HCT116 (cell line): ENCODE measurements at regions of chr2 and their contacts with region 1.

Region 1: GRCh38 chr2:181953881-181954537 is 31.6 kb upstream of the PPP1R1C start:
- DNase-seq: peak; percentile 83
- ATAC-seq: peak; percentile 62
- H3K4me3 ChIP-seq: peak overlapping the region; percentile 22 to 39
- H3K27ac ChIP-seq: peak overlapping the region; percentile 98
- H3K4me1 ChIP-seq: peaks cover 79 to 97% of the 10 kb centered on the region in 2 experiments
- H3K27me3 ChIP-seq: no peaks in the 10 kb centered on the region
- CTCF ChIP-seq: peak; percentile 32 to 86 (median 68); a peak in 5 of 6 replicates
- POLR2A ChIP-seq: peak; percentile 16
- RAD21 ChIP-seq: peak; percentile 69

Region 2: DNA sequence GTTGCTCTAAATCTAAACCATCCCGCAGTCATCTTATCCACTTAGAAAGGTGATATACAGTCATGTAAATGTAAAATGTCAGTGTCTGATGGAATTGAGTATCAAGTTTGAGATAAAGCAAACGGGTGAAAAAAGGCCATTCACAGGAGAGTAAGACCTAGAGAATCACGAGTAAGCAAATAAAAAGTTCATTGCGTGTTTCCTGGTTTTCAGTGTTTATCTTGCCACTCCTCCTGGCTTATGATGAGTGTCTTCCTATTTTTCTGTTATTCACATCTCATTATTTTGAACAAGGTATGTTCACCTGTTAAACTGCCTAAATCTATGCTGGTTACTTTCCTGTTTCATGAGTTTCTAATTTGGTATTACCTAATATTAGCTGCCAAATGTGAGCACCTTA is 428.0 kb before region 1 on chr2:
- CTCF ChIA-PET with region 1: no interaction called
- POLR2A ChIA-PET with region 1: no interaction called
- RAD21 ChIA-PET with region 1: no interaction called
- intact Hi-C with region 1: no loop called
- DNase-seq: no peak
- ATAC-seq: no peak
- H3K4me3 ChIP-seq: no peak overlapping the region
- H3K27ac ChIP-seq: no peak overlapping the region
- H3K4me1 ChIP-seq: no peaks in the 10 kb centered on the region
- H3K27me3 ChIP-seq: no peaks in the 10 kb centered on the region
- CTCF ChIP-seq: no peak
- POLR2A ChIP-seq: no peak
- RAD21 ChIP-seq: no peak

Region 3: DNA sequence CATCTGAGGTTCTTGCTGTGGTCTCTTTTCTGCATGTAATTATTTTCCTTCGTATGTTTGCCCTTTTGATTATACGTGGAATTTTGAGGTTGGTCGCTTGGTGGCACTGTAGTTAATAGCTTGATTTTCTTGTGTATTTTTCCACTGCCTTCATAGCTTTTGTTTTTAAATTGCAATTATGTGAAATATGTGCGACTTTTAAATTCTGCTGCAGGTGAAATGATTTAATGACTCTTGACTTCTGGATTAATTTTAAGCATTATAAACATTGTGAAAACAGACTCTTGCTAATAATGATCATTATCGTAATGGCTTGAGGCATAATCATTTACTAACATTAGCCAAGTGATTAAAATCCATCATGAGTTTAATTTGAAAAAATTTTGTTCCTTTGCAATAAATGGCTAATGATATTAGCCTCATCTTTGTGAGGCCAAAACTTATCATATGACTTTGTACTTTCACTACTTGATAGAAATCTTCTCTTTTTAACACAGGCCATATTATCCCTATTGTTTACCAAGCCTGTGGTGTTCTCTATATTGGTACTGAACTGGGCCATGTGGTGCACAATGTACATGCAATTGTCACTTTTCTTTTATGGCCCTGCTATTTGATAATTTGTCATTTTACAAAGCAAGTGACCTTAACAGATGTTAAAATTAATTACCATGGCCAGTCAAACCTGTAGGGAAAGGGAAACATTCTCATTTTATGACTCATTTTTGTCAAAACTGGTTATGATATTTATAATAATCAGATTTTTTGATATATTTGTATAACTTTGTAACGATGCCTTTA is 210.9 kb before region 1 on chr2:
- CTCF ChIA-PET with region 1: interaction called, 14 read pairs
- POLR2A ChIA-PET with region 1: no interaction called
- RAD21 ChIA-PET with region 1: interaction called in 1 of 2 experiments, 3 read pairs
- intact Hi-C with region 1: no loop called
- DNase-seq: peak; percentile 68
- ATAC-seq: peak; percentile 57
- H3K4me3 ChIP-seq: peak overlapping the region in 1 of 2 experiments; percentile 7; a peak in 1 of 4 replicates
- H3K27ac ChIP-seq: peak overlapping the region; percentile 93
- H3K4me1 ChIP-seq: peaks cover 31 to 63% of the 10 kb centered on the region in 2 experiments
- H3K27me3 ChIP-seq: no peaks in the 10 kb centered on the region
- CTCF ChIP-seq: peak; percentile 47 to 85 (median 60)
- POLR2A ChIP-seq: no peak
- RAD21 ChIP-seq: peak; percentile 93

Region 4: GRCh38 chr2:181780047-181780651 is 173.9 kb before region 1 on chr2:
- CTCF ChIA-PET with region 1: interaction called, 3 read pairs
- POLR2A ChIA-PET with region 1: interaction called, 4 read pairs
- RAD21 ChIA-PET with region 1: no interaction called
- intact Hi-C with region 1: loop called (anchors 5 kb)
- DNase-seq: no peak
- ATAC-seq: no peak
- H3K4me3 ChIP-seq: no peak overlapping the region
- H3K27ac ChIP-seq: peak overlapping the region; percentile 92
- H3K4me1 ChIP-seq: peaks cover 85 to 94% of the 10 kb centered on the region in 2 experiments
- H3K27me3 ChIP-seq: no peaks in the 10 kb centered on the region
- CTCF ChIP-seq: no peak
- POLR2A ChIP-seq: no peak
- RAD21 ChIP-seq: no peak

Region 5: DNA sequence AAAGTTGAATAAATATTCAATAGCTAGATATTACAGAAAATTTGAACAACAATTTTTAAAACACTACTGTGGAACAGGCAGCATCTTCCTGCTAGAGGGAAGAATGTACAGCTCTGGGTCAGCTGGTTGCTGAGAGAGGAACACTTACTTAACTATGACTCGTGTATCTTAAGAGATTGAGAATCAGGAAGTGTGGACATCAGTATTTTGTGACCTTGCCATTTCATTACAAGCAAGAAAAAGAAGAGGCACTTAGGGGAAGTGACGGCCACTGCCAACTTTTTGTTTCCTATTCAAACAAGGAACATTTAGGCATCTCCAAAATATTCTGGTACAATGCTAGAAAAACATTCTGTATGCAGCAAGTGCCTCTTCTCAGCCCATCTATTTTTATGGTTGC is 16.5 kb before region 1 on chr2:
- CTCF ChIA-PET with region 1: interaction called, 17 read pairs
- POLR2A ChIA-PET with region 1: interaction called, 5 read pairs
- RAD21 ChIA-PET with region 1: no interaction called
- intact Hi-C with region 1: no loop called
- DNase-seq: no peak
- ATAC-seq: no peak
- H3K4me3 ChIP-seq: no peak overlapping the region
- H3K27ac ChIP-seq: no peak overlapping the region
- H3K4me1 ChIP-seq: peaks cover 19 to 33% of the 10 kb centered on the region in 2 experiments
- H3K27me3 ChIP-seq: no peaks in the 10 kb centered on the region
- CTCF ChIP-seq: no peak
- POLR2A ChIP-seq: no peak
- RAD21 ChIP-seq: no peak